Caco-2 (cell line): ENCODE measurements at regions of chr6 and their contacts with region 1.

Region 1: GRCh38 chr6:37059344-37060206 is 54.1 kb downstream of the FGD2 start:
- DNase-seq: peak; percentile 87 to 89
- H3K4me3 ChIP-seq: no peak overlapping the region
- H3K4me3 Mint-ChIP-seq: peak overlapping the region; percentile 34
- H3K27ac Mint-ChIP-seq: peak overlapping the region; percentile 95
- H3K4me1 ChIP-seq: peaks cover 22% of the 10 kb centered on the region
- H3K4me1 Mint-ChIP-seq: peaks cover 18% of the 10 kb centered on the region
- H3K27me3 ChIP-seq: no peaks in the 10 kb centered on the region
- H3K27me3 Mint-ChIP-seq: no peaks in the 10 kb centered on the region
- CTCF ChIP-seq: peak; percentile 57 to 88

Region 2: DNA sequence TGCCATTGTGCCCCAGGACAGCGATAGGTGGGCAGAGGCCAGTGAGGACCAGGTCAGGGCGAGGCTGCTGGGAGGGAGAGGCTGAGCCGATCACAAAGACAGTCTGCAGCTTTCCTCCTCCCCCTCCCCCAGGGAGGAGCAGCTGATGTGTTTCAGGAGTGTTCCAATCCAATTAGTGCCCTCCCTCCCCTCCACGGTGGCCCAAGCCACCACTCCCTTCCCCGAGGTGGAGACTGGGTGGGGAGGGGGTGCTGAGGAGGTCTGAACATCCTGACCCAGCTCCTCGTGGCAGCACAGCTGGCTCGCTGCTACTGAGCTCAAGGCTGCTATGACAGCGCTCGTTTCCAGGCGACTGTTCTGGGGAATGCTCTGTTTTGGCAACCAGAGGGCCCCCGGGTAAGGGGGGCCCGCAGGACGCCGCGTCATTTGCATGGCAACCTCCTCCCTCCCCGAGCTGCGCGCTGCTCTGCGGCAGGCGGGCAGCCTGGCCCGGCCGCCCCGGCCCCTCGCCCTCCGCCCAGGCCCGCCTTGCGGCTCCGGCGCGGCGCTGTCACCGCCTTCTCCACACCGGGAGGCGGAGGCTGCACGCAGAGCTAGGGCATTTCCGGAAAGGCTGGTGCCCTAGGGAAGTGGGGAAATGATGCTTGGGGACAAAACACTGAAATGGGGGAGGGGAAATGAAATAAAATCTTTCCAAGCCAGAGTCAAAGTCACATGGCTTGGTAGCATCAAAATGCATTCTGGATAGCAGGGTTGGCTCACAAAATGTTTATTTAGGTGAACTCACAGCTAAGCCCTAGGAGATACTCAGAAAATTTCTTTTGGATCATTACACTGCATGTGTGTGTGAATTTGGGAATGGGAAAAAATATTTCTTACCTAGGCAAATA is 42.9 kb after region 1 on chr6:
- CTCF ChIA-PET with region 1: interaction called, 4 read pairs
- POLR2A ChIA-PET with region 1: interaction called, 5 read pairs
- intact Hi-C with region 1: loop called (anchors 1 kb)
- DNase-seq: peak; percentile 84 to 88
- H3K4me3 ChIP-seq: peak overlapping the region; percentile 16
- H3K4me3 Mint-ChIP-seq: peak overlapping the region; percentile 82
- H3K27ac Mint-ChIP-seq: peak overlapping the region; percentile 92
- H3K4me1 ChIP-seq: peaks cover 53% of the 10 kb centered on the region
- H3K4me1 Mint-ChIP-seq: peaks cover 26% of the 10 kb centered on the region
- H3K27me3 ChIP-seq: no peaks in the 10 kb centered on the region
- H3K27me3 Mint-ChIP-seq: no peaks in the 10 kb centered on the region
- CTCF ChIP-seq: no peak

Region 3: DNA sequence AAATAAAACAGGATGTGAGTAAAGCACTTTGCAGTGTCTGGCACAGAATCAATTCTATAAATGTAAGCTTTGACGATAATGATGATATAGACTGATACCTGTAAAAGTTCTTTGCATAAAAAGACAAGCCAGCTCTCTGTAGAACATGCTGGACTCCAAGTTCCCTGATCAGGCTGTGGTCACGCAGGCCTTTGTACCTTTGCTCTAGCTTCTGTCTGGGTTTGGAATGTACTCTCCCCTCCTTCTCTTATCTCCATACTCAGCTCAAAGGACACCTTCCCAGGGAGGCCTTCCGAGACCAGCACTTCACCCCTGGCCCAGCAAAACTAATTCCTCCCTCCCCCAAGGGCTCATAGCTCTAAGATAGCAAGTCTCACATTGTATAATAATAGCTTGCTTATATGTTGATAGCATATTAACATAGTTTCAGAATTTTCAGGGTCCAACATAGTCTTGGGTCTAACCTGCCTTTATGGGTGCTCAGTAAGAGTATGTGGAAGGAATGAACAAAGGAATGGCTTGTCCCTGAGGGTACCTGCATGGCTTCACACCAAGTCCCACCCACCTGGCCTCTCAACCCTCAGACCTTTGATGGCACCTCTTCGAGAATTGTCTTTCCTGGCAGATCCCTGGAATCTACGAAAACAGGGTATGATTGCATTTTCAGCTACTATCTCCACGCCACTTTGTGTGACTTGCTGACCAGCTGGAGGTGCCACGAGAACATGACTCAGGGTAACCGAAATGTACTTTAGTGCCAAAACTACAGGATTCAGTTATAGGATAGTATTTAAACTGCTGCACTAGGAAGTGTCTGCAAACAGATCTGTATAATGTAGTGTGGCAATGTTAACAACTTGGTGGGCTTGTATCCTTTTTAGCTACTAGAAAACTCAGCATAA is 68.6 kb after region 1 on chr6:
- CTCF ChIA-PET with region 1: no interaction called
- POLR2A ChIA-PET with region 1: no interaction called
- intact Hi-C with region 1: loop called (anchors 1 kb)
- DNase-seq: peak; percentile 82 to 88
- H3K4me3 ChIP-seq: no peak overlapping the region
- H3K4me3 Mint-ChIP-seq: peak overlapping the region; percentile 77
- H3K27ac Mint-ChIP-seq: peak overlapping the region; percentile 97
- H3K4me1 ChIP-seq: peaks cover 66% of the 10 kb centered on the region
- H3K4me1 Mint-ChIP-seq: peaks cover 50% of the 10 kb centered on the region
- H3K27me3 ChIP-seq: no peaks in the 10 kb centered on the region
- H3K27me3 Mint-ChIP-seq: no peaks in the 10 kb centered on the region
- CTCF ChIP-seq: no peak

Region 4: DNA sequence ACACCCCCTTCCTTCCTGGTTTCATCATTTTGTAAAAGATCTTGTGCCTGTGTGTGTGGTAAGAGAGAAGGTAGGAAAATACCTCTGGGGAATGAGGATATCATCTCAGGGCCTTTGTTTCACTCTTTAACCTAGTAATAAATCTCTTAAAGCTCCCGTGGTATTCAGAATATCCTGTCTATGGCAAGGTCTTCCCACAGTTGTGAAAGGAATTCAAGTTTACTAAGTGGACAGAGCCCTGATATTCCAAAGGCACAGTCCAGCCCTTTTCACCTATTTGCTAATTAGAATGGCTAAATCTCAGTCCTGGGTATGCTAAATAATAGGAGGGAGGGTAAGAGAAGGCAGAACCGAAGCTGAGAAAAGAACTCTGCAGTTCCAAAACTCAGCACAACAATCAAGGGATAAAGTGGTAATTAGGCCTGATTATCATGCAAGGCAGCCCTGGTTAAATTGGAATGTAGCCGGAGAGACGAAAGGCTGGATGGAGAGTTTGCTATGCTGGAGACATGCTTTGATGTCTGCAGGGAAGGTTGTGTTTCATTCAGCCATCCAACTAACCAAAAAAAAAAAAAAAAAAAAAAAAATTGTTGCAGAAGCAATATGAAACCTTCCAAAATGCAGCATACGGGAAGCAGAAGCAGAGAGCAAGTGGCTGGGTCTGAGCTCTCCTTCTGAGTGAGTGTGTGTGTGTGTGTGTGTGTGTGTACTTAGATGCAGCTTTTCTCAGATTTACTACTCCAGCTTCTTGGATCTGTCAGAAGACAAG is 81.9 kb after region 1 on chr6:
- CTCF ChIA-PET with region 1: no interaction called
- POLR2A ChIA-PET with region 1: no interaction called
- intact Hi-C with region 1: no loop called
- DNase-seq: peak in 1 of 2 experiments; percentile 37
- H3K4me3 ChIP-seq: no peak overlapping the region
- H3K4me3 Mint-ChIP-seq: peak overlapping the region; percentile 50
- H3K27ac Mint-ChIP-seq: peak overlapping the region; percentile 63
- H3K4me1 ChIP-seq: peaks cover 78% of the 10 kb centered on the region
- H3K4me1 Mint-ChIP-seq: peaks cover 48% of the 10 kb centered on the region
- H3K27me3 ChIP-seq: no peaks in the 10 kb centered on the region
- H3K27me3 Mint-ChIP-seq: no peaks in the 10 kb centered on the region
- CTCF ChIP-seq: no peak

Region 5: DNA sequence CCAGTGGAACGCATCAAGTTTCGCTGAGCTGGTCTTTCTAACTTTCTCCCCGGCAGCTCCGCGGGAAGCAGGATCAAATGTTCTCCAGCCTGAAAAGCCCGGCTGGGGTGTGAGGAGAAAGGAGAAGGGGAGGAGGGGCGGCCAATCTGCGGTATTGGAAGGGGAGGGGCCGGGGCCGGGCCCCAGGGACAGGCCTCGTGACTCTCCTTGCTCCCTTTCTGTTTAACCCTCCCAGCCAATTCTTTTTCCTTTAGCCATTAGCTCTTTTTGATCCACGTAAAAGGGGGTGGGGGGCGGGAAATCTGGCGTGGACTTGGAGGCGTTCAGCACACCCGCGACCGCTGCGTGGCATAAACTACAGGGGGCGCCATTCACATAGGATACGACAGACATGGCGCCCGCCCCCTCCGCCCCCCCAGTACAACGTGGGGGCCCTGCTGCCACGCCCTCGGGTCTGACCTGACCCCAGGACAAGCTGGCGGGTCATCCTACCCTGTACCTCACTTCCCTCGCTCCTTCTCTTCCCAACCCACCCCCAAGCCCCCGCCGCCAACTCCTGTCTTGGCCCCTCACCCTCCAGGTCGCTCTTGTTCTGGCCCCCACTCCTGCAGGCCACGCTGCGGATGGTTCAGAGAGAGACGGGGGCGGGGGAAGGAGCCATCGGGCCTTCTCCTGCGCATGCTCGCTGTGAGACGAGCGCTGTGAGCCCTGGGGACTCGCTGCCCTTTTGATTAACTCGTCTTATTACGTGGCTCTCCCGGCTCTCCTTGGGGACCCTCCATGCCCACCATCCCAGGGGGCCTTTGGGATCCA is 645.9 kb after region 1 on chr6:
- CTCF ChIA-PET with region 1: no interaction called
- POLR2A ChIA-PET with region 1: no interaction called
- intact Hi-C with region 1: no loop called
- DNase-seq: no peak
- H3K4me3 ChIP-seq: no peak overlapping the region
- H3K4me3 Mint-ChIP-seq: no peak overlapping the region
- H3K27ac Mint-ChIP-seq: no peak overlapping the region
- H3K4me1 ChIP-seq: no peaks in the 10 kb centered on the region
- H3K4me1 Mint-ChIP-seq: no peaks in the 10 kb centered on the region
- H3K27me3 ChIP-seq: no peaks in the 10 kb centered on the region
- H3K27me3 Mint-ChIP-seq: peaks cover 9% of the 10 kb centered on the region
- CTCF ChIP-seq: no peak

Region 6: GRCh38 chr6:37819177-37819823 is 759.7 kb after region 1 on chr6 and contains the start of gene ZFAND3:
- CTCF ChIA-PET with region 1: no interaction called
- POLR2A ChIA-PET with region 1: interaction called, 10 read pairs
- intact Hi-C with region 1: no loop called
- DNase-seq: peak; percentile 96 to 98
- H3K4me3 ChIP-seq: peak within 1 kb of the TSS; percentile 74
- H3K4me3 Mint-ChIP-seq: peak within 1 kb of the TSS; percentile 99
- H3K27ac Mint-ChIP-seq: peak within 1 kb of the TSS; percentile 99
- H3K4me1 ChIP-seq: peaks cover 41% of the 10 kb centered on the region
- H3K4me1 Mint-ChIP-seq: peaks cover 29% of the 10 kb centered on the region
- H3K27me3 ChIP-seq: no peaks in the 10 kb centered on the region
- H3K27me3 Mint-ChIP-seq: no peaks in the 10 kb centered on the region
- CTCF ChIP-seq: no peak
- total RNA-seq, gene ZFAND3: 91.1 and 107 TPM in 2 replicates